Tibial artery (tissue), 4 donors: ENCODE measurements at regions of chr18 and their contacts with region 1.

Region 1: DNA sequence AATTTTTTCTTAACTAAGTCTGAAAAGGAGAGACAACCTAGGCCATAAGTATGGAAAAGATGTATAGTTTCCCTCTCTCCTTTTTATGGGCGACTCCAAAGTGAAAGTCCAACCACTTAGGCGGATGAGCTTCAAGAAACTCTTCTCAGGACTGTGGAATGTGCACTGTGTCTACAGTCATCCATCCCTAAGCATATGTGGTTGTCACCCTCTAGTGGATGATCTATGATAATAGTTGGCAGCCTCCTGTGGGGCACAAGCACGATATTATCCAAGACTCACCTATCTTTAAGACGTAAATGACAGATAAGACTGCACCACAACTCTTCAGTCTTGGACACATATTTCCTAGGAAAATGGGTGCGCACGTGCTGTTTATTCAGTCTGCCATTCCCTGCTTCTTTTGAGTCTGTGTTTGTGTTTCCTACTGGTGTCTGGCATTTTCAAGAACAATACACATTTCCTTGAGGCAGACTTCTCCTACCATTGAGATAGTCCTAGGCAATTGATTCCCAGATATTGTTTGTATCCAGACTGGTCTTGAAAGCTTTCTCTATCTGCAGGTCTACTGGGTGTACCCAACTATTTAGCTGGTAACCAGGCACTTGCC is 145.5 kb upstream of the CTAGE1 start:
- DNase-seq: peak in 1 of 2 donors; percentile 40
- H3K4me3 ChIP-seq: peak overlapping the region; percentile 24 to 34
- H3K27ac ChIP-seq: peak overlapping the region; percentile 92 to 93
- H3K4me1 ChIP-seq: peaks cover 0 to 18% (median 6%) of the 10 kb centered on the region in 4 donors
- H3K27me3 ChIP-seq: no peaks in the 10 kb centered on the region
- CTCF ChIP-seq: peak; percentile 73 to 86

Region 2: DNA sequence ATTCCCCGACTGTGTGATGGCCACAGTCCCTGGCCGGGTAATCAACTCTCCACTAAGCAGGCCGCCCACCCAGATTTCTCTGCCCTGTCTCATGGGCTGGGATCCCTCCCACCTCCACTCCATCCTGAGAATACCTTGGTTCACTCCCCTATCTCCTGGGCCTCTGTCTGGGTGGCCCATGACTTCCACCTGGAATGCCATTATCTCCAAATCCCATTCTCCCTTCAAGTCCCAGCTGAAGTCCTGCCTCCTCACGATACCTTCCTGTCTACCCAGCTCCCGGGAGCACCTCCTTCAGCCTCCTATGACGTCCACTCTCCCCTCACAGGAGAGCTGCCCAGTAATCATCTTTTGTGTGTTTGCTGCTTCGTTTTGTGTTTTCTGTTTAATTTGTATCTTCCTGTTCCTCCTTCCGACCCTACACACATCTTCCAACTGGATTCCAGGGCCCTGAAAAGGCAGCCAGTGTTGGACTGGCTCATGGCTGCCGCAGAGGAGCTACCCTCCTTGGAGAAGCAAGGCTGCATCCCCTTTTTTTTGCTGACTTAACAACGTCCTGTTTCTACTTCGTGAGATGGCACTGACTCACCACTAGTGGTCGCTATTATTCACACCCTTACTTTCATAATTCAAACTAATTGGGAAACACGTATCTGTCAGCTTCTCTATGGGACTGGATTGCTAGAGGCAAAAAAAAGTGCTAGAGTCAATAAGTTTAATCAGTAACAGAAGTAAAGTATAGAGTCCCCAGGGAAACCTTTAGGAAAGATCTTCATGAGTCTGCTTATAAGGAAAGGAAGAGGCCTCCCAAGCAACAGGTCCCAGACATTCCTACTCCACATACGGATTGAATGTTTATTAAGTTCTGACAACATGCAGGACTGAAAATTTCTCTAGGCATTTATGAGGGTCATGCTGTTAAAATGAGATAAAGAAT is 565.7 kb before region 1 on chr18:
- intact Hi-C with region 1: loop called (anchors 5 kb)
- DNase-seq: no peak
- H3K4me3 ChIP-seq: no peak overlapping the region
- H3K27ac ChIP-seq: no peak overlapping the region
- H3K4me1 ChIP-seq: peaks cover 0 to 19% (median 0%) of the 10 kb centered on the region in 4 donors
- H3K27me3 ChIP-seq: no peaks in the 10 kb centered on the region
- CTCF ChIP-seq: peak; percentile 54 to 73

Region 3: GRCh38 chr18:22324191-22325131 is 238.7 kb before region 1 on chr18:
- intact Hi-C with region 1: loop called (anchors 5 kb)
- DNase-seq: peak; percentile 52 to 84
- H3K4me3 ChIP-seq: peak overlapping the region; percentile 36 to 39
- H3K27ac ChIP-seq: peak overlapping the region; percentile 36 to 51
- H3K4me1 ChIP-seq: peaks cover 0 to 14% (median 11%) of the 10 kb centered on the region in 4 donors
- H3K27me3 ChIP-seq: no peaks in the 10 kb centered on the region
- CTCF ChIP-seq: peak; percentile 15 to 31

Region 4: GRCh38 chr18:22385718-22386117 is 177.5 kb before region 1 on chr18:
- intact Hi-C with region 1: loop called (anchors 10 kb)
- DNase-seq: no peak
- H3K4me3 ChIP-seq: no peak overlapping the region
- H3K27ac ChIP-seq: no peak overlapping the region
- H3K4me1 ChIP-seq: peaks cover 0 to 10% (median 2%) of the 10 kb centered on the region in 4 donors
- H3K27me3 ChIP-seq: no peaks in the 10 kb centered on the region
- CTCF ChIP-seq: no peak

Region 5: DNA sequence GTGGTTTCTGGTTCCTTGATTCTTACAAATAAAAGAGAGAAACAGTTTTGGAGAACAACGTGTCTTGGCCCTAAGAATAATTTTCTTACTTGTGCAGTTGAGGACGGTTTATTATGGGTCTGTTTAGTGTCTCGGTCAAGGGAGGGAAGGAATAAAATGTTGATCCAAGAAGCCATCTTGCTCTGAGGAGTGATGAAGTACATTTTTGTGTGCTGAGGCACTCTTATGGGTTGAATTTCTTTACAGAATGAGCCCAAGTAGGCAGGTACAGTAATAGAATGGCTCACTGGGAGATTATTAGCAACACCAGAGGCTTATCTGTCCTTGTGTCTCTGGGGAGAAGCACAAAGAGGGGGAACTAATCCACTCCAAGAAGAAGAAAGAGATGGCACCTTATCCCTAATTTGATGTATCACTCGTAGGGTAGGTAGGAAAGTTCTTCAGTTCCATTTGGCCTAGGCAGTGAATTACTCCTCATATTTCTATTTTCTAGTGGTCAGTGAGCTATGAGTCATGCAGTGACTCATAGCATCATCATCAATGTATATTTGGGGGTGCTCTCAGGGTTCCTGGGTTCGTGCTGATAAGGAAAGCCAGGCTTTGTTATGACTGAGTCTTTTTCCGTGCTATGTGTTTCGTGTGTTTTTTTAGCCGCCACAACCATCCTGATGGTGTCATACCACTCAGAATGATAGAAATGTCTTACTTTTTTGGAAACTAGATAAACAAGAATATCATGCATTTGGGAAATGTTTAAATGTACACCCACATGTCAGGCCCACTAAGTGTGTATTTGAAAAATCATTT is 104.6 kb after region 1 on chr18:
- intact Hi-C with region 1: no loop called
- DNase-seq: no peak
- H3K4me3 ChIP-seq: no peak overlapping the region
- H3K27ac ChIP-seq: no peak overlapping the region
- H3K4me1 ChIP-seq: peaks cover 0 to 9% (median 2%) of the 10 kb centered on the region in 4 donors
- H3K27me3 ChIP-seq: no peaks in the 10 kb centered on the region
- CTCF ChIP-seq: no peak